GM12878 (cell line): ENCODE measurements at regions of chr6 and their contacts with region 1.

Region 1: GRCh38 chr6:167826230-167826895 is 348 bp upstream of the AFDN start:
- DNase-seq: no peak
- ATAC-seq: peak; percentile 76
- H3K4me3 ChIP-seq: peak overlapping the region; percentile 84
- H3K27ac ChIP-seq: no peak overlapping the region
- H3K4me1 ChIP-seq: peaks cover 12% of the 10 kb centered on the region
- H3K27me3 ChIP-seq: peaks cover 0 to 3% of the 10 kb centered on the region in 2 experiments; a peak in 3 of 4 replicates
- CTCF ChIP-seq: peak; percentile 15 to 57 (median 47); a peak in 4 of 6 replicates
- EP300 ChIP-seq: no peak
- POLR2A ChIP-seq: no peak
- RAD21 ChIP-seq: 0 out of 2 replicates have a peak, but pooled peaks have one; percentile 30

Region 2: GRCh38 chr6:167846997-167847606 is 20.7 kb after region 1 on chr6:
- CTCF ChIA-PET with region 1: interaction called, 9 read pairs
- POLR2A ChIA-PET with region 1: interaction called, 4 read pairs
- RAD21 ChIA-PET with region 1: interaction called, 10 read pairs
- SMC1A ChIA-PET with region 1: interaction called, 28 read pairs
- in situ Hi-C with region 1: no loop called
- intact Hi-C with region 1: no loop called
- DNase-seq: no peak
- ATAC-seq: no peak
- H3K4me3 ChIP-seq: no peak overlapping the region
- H3K27ac ChIP-seq: no peak overlapping the region
- H3K4me1 ChIP-seq: peaks cover 7% of the 10 kb centered on the region; the same call in 1 of the 2 replicates
- H3K27me3 ChIP-seq: no peaks in the 10 kb centered on the region
- CTCF ChIP-seq: no peak
- EP300 ChIP-seq: no peak
- POLR2A ChIP-seq: no peak
- RAD21 ChIP-seq: no peak

Region 3: GRCh38 chr6:167855825-167856425 is 29.6 kb after region 1 on chr6:
- CTCF ChIA-PET with region 1: interaction called, 5 read pairs
- POLR2A ChIA-PET with region 1: interaction called, 9 read pairs
- RAD21 ChIA-PET with region 1: interaction called, 10 read pairs
- SMC1A ChIA-PET with region 1: interaction called, 58 read pairs
- in situ Hi-C with region 1: no loop called
- intact Hi-C with region 1: no loop called
- DNase-seq: no peak
- ATAC-seq: no peak
- H3K4me3 ChIP-seq: no peak overlapping the region
- H3K27ac ChIP-seq: no peak overlapping the region
- H3K4me1 ChIP-seq: peaks cover 4% of the 10 kb centered on the region; the same call in 1 of the 2 replicates
- H3K27me3 ChIP-seq: no peaks in the 10 kb centered on the region
- CTCF ChIP-seq: no peak
- EP300 ChIP-seq: no peak
- POLR2A ChIP-seq: no peak
- RAD21 ChIP-seq: no peak

Region 4: GRCh38 chr6:167898673-167899311 is 72.4 kb after region 1 on chr6:
- CTCF ChIA-PET with region 1: interaction called, 10 read pairs
- POLR2A ChIA-PET with region 1: no interaction called
- RAD21 ChIA-PET with region 1: interaction called, 4 read pairs
- SMC1A ChIA-PET with region 1: interaction called, 8 read pairs
- in situ Hi-C with region 1: no loop called
- intact Hi-C with region 1: loop called (anchors 2 kb)
- DNase-seq: no peak
- ATAC-seq: peak; percentile 74
- H3K4me3 ChIP-seq: no peak overlapping the region
- H3K27ac ChIP-seq: no peak overlapping the region
- H3K4me1 ChIP-seq: no peaks in the 10 kb centered on the region
- H3K27me3 ChIP-seq: no peaks in the 10 kb centered on the region
- CTCF ChIP-seq: peak; percentile 68 to 77 (median 71); a peak in 5 of 6 replicates
- EP300 ChIP-seq: no peak
- POLR2A ChIP-seq: no peak
- RAD21 ChIP-seq: peak; percentile 92